H1 (cell line): ENCODE measurements at regions of chr17 and their contacts with region 1.

Region 1: GRCh38 chr17:50094753-50095619 is at the start of gene PDK2:
- DNase-seq: peak; percentile 85 to 95
- H3K4me3 ChIP-seq: peak within 1 kb of the TSS; percentile 76 to 92 (median 82)
- H3K27ac ChIP-seq: no peak within 1 kb of the TSS; the same call in 1 of the 2 replicates
- H3K4me1 ChIP-seq: peaks cover 0 to 7% (median 5%) of the 10 kb centered on the region in 4 experiments; a peak in 4 of 7 replicates
- H3K27me3 ChIP-seq: peaks cover 0 to 3% (median 0%) of the 10 kb centered on the region in 4 experiments; a peak in 3 of 7 replicates
- CTCF ChIP-seq: no peak
- EP300 ChIP-seq: no peak
- POLR2A ChIP-seq: no peak
- RAD21 ChIP-seq: no peak
- total RNA-seq, gene PDK2: 17.8 and 18.3 TPM in 2 replicates

Region 2: DNA sequence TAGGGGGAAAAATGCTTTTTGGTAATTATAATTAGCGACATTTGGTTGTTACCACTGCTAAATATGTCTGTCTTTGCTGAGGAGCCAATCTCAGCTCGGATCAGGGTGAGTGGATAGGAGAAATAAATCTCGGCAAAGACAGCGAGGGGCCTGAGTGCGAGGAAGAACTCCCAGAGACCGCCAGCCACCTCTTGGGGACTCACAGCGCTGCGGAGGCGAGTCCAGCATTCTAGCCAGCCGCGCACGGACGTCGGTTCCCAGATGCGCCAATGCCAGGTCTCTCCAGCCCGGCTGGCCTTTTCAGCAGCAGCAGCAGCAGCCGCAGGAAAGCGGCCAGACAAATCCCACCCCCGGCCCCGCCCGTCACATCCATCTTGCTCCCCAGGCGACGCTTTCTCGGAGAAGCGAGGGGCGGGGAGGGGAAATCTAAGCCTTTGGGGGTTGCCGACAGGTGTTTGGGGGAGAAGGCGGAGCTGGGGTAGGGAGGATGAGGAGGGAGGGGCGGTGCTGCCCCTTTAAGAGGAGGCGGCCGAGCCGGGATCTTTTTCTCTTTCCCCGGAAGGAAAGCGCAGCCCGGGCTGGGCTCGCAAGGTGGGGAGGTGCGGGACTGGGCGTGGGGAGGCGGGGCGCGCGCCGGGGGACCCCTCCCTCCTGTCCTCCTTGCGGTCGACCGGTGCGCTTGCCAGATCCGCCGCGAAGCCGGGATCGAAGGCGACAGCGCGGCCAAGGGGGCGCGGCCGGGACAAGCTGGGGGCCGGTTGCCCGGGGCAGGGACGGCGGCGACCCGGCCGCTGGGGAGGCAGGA is 39.4 kb before region 1 on chr17 and contains the start of gene ITGA3:
- CTCF ChIA-PET with region 1: interaction called, 39 read pairs
- POLR2A ChIA-PET with region 1: no interaction called
- DNase-seq: peak; percentile 84 to 89
- H3K4me3 ChIP-seq: peak within 1 kb of the TSS; percentile 37 to 65 (median 58)
- H3K27ac ChIP-seq: no peak within 1 kb of the TSS
- H3K4me1 ChIP-seq: peaks cover 11 to 21% (median 15%) of the 10 kb centered on the region in 4 experiments
- H3K27me3 ChIP-seq: peaks cover 0 to 13% (median 11%) of the 10 kb centered on the region in 4 experiments; a peak in 5 of 7 replicates
- CTCF ChIP-seq: peak in 2 of 3 experiments; percentile 4 to 17; a peak in 3 of 4 replicates
- EP300 ChIP-seq: no peak
- POLR2A ChIP-seq: no peak
- RAD21 ChIP-seq: no peak
- total RNA-seq, gene ITGA3: 21.7 and 24.2 TPM in 2 replicates

Region 3: DNA sequence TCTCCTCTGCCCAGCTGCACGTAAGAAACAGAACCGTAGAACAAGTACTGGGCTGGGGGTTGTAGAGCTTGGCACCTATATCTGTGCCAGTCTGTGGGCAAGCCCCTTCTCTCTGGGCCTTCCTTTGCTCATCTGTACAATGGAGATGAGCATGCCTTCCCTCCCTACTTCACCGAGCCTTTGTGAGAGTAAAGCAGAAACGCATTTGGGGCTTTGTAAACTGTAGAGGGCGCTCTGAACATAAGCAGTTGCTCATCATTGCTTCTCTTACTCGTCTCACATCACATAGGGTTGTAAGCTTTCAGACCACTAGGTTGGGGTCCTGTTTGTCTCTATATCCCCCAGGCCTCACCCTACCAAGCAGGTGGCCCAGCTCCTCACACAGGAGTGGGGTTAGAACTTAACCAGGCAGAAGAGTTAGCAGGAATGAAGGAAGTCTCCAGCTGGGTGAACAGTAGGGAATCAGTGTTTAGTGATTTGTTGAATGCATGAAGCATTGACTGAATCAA is 19.9 kb after region 1 on chr17:
- CTCF ChIA-PET with region 1: interaction called, 412 read pairs
- POLR2A ChIA-PET with region 1: interaction called, 6 read pairs
- DNase-seq: peak in 1 of 2 experiments; percentile 66
- H3K4me3 ChIP-seq: no peak overlapping the region
- H3K27ac ChIP-seq: no peak overlapping the region
- H3K4me1 ChIP-seq: peaks cover 6 to 14% (median 11%) of the 10 kb centered on the region in 4 experiments
- H3K27me3 ChIP-seq: peaks cover 0 to 18% (median 12%) of the 10 kb centered on the region in 4 experiments; a peak in 5 of 7 replicates
- CTCF ChIP-seq: peak in 2 of 3 experiments; percentile 89 to 93; a peak in 3 of 4 replicates
- EP300 ChIP-seq: no peak
- POLR2A ChIP-seq: no peak
- RAD21 ChIP-seq: peak; percentile 68 to 73

Region 4: GRCh38 chr17:50139950-50140871 is 45.2 kb after region 1 on chr17:
- CTCF ChIA-PET with region 1: interaction called, 15 read pairs
- POLR2A ChIA-PET with region 1: no interaction called
- DNase-seq: peak; percentile 72 to 96
- H3K4me3 ChIP-seq: no peak overlapping the region
- H3K27ac ChIP-seq: no peak overlapping the region; the same call in 1 of the 2 replicates
- H3K4me1 ChIP-seq: peaks cover 0 to 7% (median 0%) of the 10 kb centered on the region in 4 experiments; a peak in 1 of 7 replicates
- H3K27me3 ChIP-seq: no peaks in the 10 kb centered on the region
- CTCF ChIP-seq: peak; percentile 87 to 98 (median 95)
- EP300 ChIP-seq: peak in 1 of 2 experiments; percentile 18; a peak in 1 of 3 replicates
- POLR2A ChIP-seq: no peak
- RAD21 ChIP-seq: peak; percentile 68 to 71

Region 5: GRCh38 chr17:50161023-50161910 is 66.3 kb after region 1 on chr17:
- CTCF ChIA-PET with region 1: interaction called, 25 read pairs
- POLR2A ChIA-PET with region 1: no interaction called
- DNase-seq: peak in 1 of 2 experiments; percentile 99
- H3K4me3 ChIP-seq: peak overlapping the region; percentile 28 to 62 (median 40)
- H3K27ac ChIP-seq: no peak overlapping the region
- H3K4me1 ChIP-seq: peaks cover 0 to 7% (median 6%) of the 10 kb centered on the region in 4 experiments; a peak in 3 of 7 replicates
- H3K27me3 ChIP-seq: peaks cover 0 to 6% (median 0%) of the 10 kb centered on the region in 4 experiments; a peak in 2 of 7 replicates
- CTCF ChIP-seq: peak; percentile 89 to 99 (median 97)
- EP300 ChIP-seq: no peak
- POLR2A ChIP-seq: peak in 1 of 2 experiments; percentile 55; a peak in 1 of 3 replicates
- RAD21 ChIP-seq: peak; percentile 56 to 72